Activated CD4-positive, alpha-beta memory T cell treated with anti-CD3 and anti-CD28 coated beads, Interleukin-2, amount 10 ng/mL, durations not matched to agents 7 days and 5 days (primary cell): ENCODE measurements at regions of chr12 and their contacts with region 1.

Region 1: DNA sequence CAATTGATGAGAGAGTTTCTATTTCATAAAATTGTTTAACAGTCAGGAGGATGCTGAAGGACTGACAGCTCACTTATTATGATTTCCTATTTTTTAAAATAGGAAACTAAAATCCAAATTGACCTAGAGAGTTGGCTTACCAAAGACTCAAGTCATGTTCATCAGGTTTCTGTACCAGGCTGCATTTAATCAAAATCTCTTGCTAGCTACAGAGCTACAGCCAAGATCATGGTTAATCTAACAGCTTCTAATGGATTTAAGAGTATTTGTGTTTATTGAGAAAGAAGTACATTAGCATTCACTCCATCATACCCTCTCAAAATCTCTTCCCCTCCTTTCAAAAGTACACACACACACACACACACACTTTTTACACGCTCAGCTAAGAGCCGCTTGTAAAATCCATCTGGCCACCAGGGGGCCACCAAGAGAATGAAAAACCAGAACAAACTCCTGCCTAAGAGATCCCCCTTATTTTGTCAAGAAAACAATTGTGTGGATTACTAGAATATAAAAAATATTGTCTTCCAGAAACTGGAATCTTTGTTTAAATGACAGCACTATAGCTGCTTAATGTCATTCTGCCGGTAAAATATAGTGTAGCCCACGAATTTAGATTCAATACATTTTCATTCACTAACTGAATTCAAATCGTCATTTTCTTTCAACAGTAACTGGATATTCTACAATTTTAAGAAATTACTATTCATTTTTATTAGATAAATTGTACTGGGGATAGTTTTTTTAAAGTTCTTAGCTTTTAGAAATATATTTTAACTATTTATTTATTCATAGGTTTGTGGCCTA is 334.0 kb downstream of the BTG1 start:
- DNase-seq: peak; percentile 69
- H3K4me3 Mint-ChIP-seq: no peak overlapping the region
- H3K27ac Mint-ChIP-seq: peak overlapping the region; percentile 13
- H3K4me1 Mint-ChIP-seq: peaks cover 5% of the 10 kb centered on the region
- H3K27me3 Mint-ChIP-seq: no peaks in the 10 kb centered on the region

Region 2: GRCh38 chr12:91778938-91779400 is 32.7 kb before region 1 on chr12:
- CTCF ChIA-PET with region 1: interaction called, 14 read pairs
- POLR2A ChIA-PET with region 1: interaction called, 3 read pairs
- DNase-seq: peak; percentile 61
- H3K4me3 Mint-ChIP-seq: peak overlapping the region; percentile 63
- H3K27ac Mint-ChIP-seq: peak overlapping the region; percentile 72
- H3K4me1 Mint-ChIP-seq: peaks cover 24% of the 10 kb centered on the region
- H3K27me3 Mint-ChIP-seq: no peaks in the 10 kb centered on the region

Region 3: GRCh38 chr12:91801048-91801447 is 10.6 kb before region 1 on chr12:
- CTCF ChIA-PET with region 1: interaction called, 18 read pairs
- POLR2A ChIA-PET with region 1: interaction called, 3 read pairs
- DNase-seq: no peak
- H3K4me3 Mint-ChIP-seq: no peak overlapping the region
- H3K27ac Mint-ChIP-seq: no peak overlapping the region
- H3K4me1 Mint-ChIP-seq: peaks cover 4% of the 10 kb centered on the region
- H3K27me3 Mint-ChIP-seq: no peaks in the 10 kb centered on the region

Region 4: GRCh38 chr12:91824991-91825390 is 13.3 kb after region 1 on chr12:
- CTCF ChIA-PET with region 1: interaction called, 17 read pairs
- POLR2A ChIA-PET with region 1: no interaction called
- DNase-seq: no peak
- H3K4me3 Mint-ChIP-seq: no peak overlapping the region
- H3K27ac Mint-ChIP-seq: no peak overlapping the region
- H3K4me1 Mint-ChIP-seq: no peaks in the 10 kb centered on the region
- H3K27me3 Mint-ChIP-seq: no peaks in the 10 kb centered on the region

Region 5: GRCh38 chr12:92570056-92570753 is 758.5 kb after region 1 on chr12:
- CTCF ChIA-PET with region 1: interaction called, 12 read pairs
- POLR2A ChIA-PET with region 1: no interaction called
- DNase-seq: peak; percentile 39
- H3K4me3 Mint-ChIP-seq: no peak overlapping the region
- H3K27ac Mint-ChIP-seq: no peak overlapping the region
- H3K4me1 Mint-ChIP-seq: peaks cover 22% of the 10 kb centered on the region
- H3K27me3 Mint-ChIP-seq: no peaks in the 10 kb centered on the region

Region 6: GRCh38 chr12:92649511-92650227 is 838.0 kb after region 1 on chr12:
- CTCF ChIA-PET with region 1: interaction called, 10 read pairs
- POLR2A ChIA-PET with region 1: no interaction called
- DNase-seq: peak; percentile 62
- H3K4me3 Mint-ChIP-seq: no peak overlapping the region
- H3K27ac Mint-ChIP-seq: no peak overlapping the region
- H3K4me1 Mint-ChIP-seq: peaks cover 6% of the 10 kb centered on the region
- H3K27me3 Mint-ChIP-seq: peaks cover 2% of the 10 kb centered on the region